OCI-LY7 (cell line): ENCODE measurements at regions of chr4 and their contacts with region 1.

Region 1: GRCh38 chr4:25439918-25440477 is 62.9 kb downstream of the ANAPC4 start:
- DNase-seq: peak; percentile 78
- H3K4me3 ChIP-seq: no peak overlapping the region
- H3K27ac ChIP-seq: no peak overlapping the region
- H3K4me1 ChIP-seq: no peaks in the 10 kb centered on the region
- CTCF ChIP-seq: peak; percentile 96

Region 2: DNA sequence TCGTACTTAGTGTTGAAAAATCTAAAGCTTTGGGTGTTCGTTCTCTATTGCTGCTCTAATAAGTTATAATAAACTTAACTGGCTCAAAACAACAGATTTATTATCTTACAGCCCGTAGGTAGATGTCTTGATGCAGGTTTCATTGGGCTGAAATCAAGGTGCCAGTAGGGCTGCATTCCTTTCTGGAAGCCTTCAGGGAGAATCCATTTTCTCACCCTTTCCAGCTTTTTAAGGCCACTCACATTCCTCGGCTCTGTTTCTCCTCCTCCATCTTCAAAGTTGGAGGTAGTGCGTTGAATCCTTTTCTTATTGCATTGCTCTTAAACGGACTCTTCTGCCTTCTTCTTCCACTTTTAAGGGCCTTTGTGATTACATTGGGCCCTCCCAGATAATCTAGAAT is 157.9 kb before region 1 on chr4:
- CTCF ChIA-PET with region 1: no interaction called
- POLR2A ChIA-PET with region 1: no interaction called
- intact Hi-C with region 1: no loop called
- DNase-seq: no peak
- H3K4me3 ChIP-seq: no peak overlapping the region
- H3K27ac ChIP-seq: no peak overlapping the region
- H3K4me1 ChIP-seq: no peaks in the 10 kb centered on the region
- CTCF ChIP-seq: no peak

Region 3: GRCh38 chr4:25687773-25688172 is 247.8 kb after region 1 on chr4:
- CTCF ChIA-PET with region 1: no interaction called
- POLR2A ChIA-PET with region 1: no interaction called
- intact Hi-C with region 1: loop called (anchors 10 kb)
- DNase-seq: no peak
- H3K4me3 ChIP-seq: no peak overlapping the region
- H3K27ac ChIP-seq: no peak overlapping the region
- H3K4me1 ChIP-seq: no peaks in the 10 kb centered on the region
- CTCF ChIP-seq: no peak

Region 4: GRCh38 chr4:25767877-25768725 is 328.1 kb after region 1 on chr4:
- CTCF ChIA-PET with region 1: no interaction called
- POLR2A ChIA-PET with region 1: no interaction called
- intact Hi-C with region 1: loop called (anchors 2 kb)
- DNase-seq: peak; percentile 47
- H3K4me3 ChIP-seq: no peak overlapping the region
- H3K27ac ChIP-seq: no peak overlapping the region
- H3K4me1 ChIP-seq: no peaks in the 10 kb centered on the region
- CTCF ChIP-seq: peak; percentile 80

Region 5: GRCh38 chr4:25938787-25939186 is 498.8 kb after region 1 on chr4:
- CTCF ChIA-PET with region 1: no interaction called
- POLR2A ChIA-PET with region 1: no interaction called
- intact Hi-C with region 1: loop called (anchors 10 kb)
- DNase-seq: no peak
- H3K4me3 ChIP-seq: no peak overlapping the region
- H3K27ac ChIP-seq: no peak overlapping the region
- H3K4me1 ChIP-seq: no peaks in the 10 kb centered on the region
- CTCF ChIP-seq: no peak